A549 (cell line): ENCODE measurements at regions of chr17 and their contacts with region 1.

Region 1: DNA sequence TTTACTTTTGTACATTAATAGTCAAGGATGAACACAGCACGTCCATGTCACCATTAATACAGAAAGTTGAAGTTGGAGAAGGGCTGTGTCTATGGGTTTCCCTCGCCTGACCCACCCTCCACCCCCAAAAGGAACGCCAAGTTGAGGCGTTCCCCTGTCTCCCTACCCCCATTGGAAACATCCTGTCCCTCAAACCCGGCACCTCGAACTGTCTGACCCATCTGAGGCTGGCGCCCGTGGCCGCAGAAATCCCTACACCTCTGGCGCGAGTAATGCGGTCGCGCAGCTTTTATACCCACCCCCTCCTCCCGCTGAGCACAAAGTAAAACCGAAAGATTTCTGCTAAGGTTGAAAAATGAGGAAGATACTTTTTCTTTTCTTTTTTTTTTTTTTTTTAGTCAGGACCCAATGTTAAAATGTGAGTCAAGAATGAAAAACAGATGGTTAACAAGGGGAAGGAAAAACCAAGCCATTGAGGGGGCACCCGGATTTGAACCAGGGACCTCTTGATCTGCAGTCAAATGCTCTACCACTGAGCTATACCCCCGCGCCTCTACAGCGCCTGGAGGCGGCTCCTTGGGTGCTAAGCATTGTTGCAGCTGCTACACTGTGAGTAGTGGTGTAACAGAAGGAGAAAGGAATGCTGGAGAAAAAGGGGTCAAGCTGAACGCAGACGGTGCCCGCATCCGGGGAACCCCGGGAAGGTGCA is 887 bp upstream of the LASP1 start:
- DNase-seq: peak; percentile 92 to 93
- ATAC-seq: peak; percentile 25 to 65
- H3K4me3 ChIP-seq: peak overlapping the region; percentile 94
- H3K27ac ChIP-seq: peak overlapping the region; percentile 98
- H3K4me1 ChIP-seq: peaks cover 23% of the 10 kb centered on the region
- CTCF ChIP-seq: peak; percentile 51
- EP300 ChIP-seq: 0 out of 5 replicates have a peak, but pooled peaks of 1 of the 2 experiments have one; percentile 10
- POLR2A ChIP-seq: 0 out of 2 replicates have a peak, but pooled peaks have one; percentile 12
- RAD21 ChIP-seq: peak in 1 of 2 experiments; percentile 14; a peak in 1 of 5 replicates

Region 2: GRCh38 chr17:38853292-38854219 is 15.4 kb before region 1 on chr17 and contains the start of gene RPL23:
- CTCF ChIA-PET with region 1: interaction called, 7 read pairs
- POLR2A ChIA-PET with region 1: interaction called, 83 read pairs
- DNase-seq: peak; percentile 93 to 99
- ATAC-seq: peak; percentile 91 to 95
- H3K4me3 ChIP-seq: peak within 1 kb of the TSS; percentile 87
- H3K27ac ChIP-seq: peak within 1 kb of the TSS; percentile 85 to 93
- H3K4me1 ChIP-seq: peaks cover 24% of the 10 kb centered on the region
- CTCF ChIP-seq: no peak
- EP300 ChIP-seq: no peak
- POLR2A ChIP-seq: peak; percentile 97
- RAD21 ChIP-seq: peak in 1 of 2 experiments; percentile 10; a peak in 1 of 5 replicates
- polyA plus RNA-seq, gene RPL23: 2,297 and 2,715 TPM in 2 replicates

Region 3: DNA sequence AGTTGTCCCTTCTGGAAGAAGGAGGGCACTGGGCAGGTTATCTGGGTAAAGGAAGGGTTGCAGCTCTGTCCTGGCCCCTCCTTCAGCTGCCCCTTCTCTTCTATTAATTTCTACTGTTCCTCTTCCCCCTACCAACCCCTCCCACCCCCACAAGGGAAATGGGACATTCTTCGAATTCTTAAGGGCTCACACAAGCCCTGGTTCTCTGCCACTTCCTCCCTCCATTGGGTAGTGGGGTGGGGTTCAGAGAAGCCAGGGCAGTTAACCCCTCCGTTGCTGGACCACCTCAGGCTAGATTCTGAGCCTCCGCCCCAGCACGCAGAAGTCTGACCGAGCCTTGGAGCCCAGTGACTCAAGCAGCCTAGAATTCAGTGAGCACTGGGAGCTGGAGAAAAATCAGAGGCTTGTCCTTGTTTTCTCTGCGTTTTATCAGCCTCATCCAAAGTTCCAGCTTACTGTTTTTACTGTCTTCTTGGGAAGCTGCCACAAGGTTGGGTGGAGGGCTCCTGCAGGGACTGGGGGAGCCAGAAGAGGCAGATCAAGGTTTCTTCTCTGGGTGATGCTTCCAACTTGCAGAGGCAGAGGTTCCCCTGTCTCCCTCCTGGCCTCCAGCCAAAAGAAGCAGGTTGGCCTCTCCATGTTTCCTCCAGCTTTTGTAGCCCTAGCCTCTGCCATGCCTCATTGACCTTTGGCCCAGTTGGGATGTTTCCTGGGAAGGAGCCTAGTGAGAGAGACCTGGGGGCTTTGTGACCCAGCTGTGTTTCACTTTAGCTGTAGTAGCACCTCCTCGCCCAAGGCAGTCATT is 11.1 kb after region 1 on chr17:
- CTCF ChIA-PET with region 1: interaction called, 39 read pairs
- POLR2A ChIA-PET with region 1: interaction called, 33 read pairs
- DNase-seq: peak; percentile 87 to 95
- ATAC-seq: peak; percentile 64 to 78
- H3K4me3 ChIP-seq: peak overlapping the region; percentile 24
- H3K27ac ChIP-seq: peak overlapping the region; percentile 91 to 98
- H3K4me1 ChIP-seq: peaks cover 100% of the 10 kb centered on the region
- CTCF ChIP-seq: no peak
- EP300 ChIP-seq: peak in 1 of 2 experiments; percentile 66; a peak in 1 of 5 replicates
- POLR2A ChIP-seq: no peak
- RAD21 ChIP-seq: no peak; a peak in 1 of 5 replicates

Region 4: DNA sequence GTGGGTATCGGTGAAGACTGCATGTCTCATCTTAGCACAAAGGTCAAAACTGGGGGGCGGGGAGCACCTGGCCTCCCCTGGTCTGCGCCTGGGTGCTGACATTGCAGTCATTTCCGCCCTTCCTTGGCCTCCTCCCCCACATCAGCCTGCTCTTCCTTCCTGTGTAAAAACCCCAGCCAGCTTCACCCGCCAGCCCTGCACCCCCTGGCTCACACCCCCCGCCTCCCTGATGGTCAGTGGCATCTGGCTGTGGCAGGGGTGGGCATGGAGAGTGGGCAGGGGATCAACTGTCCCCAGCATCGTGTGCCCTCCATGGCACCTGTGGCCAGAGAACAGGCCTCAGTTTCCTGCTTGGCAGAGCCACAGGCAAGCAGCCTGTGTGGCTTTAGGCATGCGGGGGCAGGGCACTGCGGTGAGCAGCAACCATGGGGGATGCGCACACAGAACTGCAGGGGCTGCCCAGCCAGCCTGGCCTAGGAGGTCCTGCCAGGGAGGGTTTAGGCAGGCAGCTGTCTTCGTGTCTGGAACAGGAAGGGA is 29.9 kb after region 1 on chr17:
- CTCF ChIA-PET with region 1: interaction called, 19 read pairs
- POLR2A ChIA-PET with region 1: interaction called, 22 read pairs
- DNase-seq: no peak
- ATAC-seq: no peak
- H3K4me3 ChIP-seq: no peak overlapping the region
- H3K27ac ChIP-seq: peak overlapping the region in 1 of 2 experiments; percentile 85; a peak in 3 of 6 replicates
- H3K4me1 ChIP-seq: peaks cover 66% of the 10 kb centered on the region
- CTCF ChIP-seq: no peak
- EP300 ChIP-seq: no peak
- POLR2A ChIP-seq: no peak
- RAD21 ChIP-seq: no peak

Region 5: DNA sequence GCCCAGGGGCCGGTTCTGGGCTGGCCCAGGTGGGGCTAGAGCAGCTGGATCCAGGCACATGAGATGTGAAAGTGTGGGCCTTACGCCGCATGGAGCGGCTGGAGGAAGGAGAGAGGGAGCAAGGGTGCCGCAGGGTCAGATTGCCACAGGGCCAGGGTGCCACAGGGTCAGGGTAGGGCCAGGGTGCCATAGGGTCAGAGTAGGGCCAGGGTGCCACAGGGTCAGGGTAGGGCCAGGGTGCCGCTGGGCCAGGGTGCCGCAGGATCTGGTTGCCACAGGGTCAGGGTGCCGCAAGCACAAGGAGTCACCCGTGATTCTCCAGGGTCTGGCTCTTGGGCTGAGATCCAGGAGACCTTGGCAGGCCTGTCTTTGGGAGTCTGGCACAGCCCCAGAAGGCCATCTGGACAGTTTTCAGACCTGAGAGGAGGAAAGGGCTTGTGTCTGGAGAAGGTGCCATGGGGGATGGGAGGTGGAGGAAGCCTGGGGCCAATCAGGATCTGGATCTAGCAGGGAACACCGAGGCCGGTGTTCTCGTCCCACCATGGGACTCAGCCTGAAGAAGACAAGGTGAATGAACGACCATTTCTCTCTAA is 43.3 kb after region 1 on chr17:
- CTCF ChIA-PET with region 1: interaction called, 90 read pairs
- POLR2A ChIA-PET with region 1: no interaction called
- DNase-seq: no peak
- ATAC-seq: no peak
- H3K4me3 ChIP-seq: no peak overlapping the region
- H3K27ac ChIP-seq: peak overlapping the region in 1 of 2 experiments; percentile 39; a peak in 1 of 6 replicates
- H3K4me1 ChIP-seq: peaks cover 34% of the 10 kb centered on the region
- CTCF ChIP-seq: no peak
- EP300 ChIP-seq: no peak
- POLR2A ChIP-seq: no peak
- RAD21 ChIP-seq: no peak

Region 6: GRCh38 chr17:38922538-38923297 is 53.7 kb after region 1 on chr17:
- CTCF ChIA-PET with region 1: interaction called, 90 read pairs
- POLR2A ChIA-PET with region 1: interaction called, 3 read pairs
- DNase-seq: no peak
- ATAC-seq: peak; percentile 59 to 63
- H3K4me3 ChIP-seq: no peak overlapping the region
- H3K27ac ChIP-seq: peak overlapping the region in 1 of 2 experiments; percentile 45; a peak in 3 of 6 replicates
- H3K4me1 ChIP-seq: peaks cover 11% of the 10 kb centered on the region; the same call in 1 of the 3 replicates
- CTCF ChIP-seq: no peak
- EP300 ChIP-seq: no peak
- POLR2A ChIP-seq: no peak
- RAD21 ChIP-seq: no peak

Region 7: DNA sequence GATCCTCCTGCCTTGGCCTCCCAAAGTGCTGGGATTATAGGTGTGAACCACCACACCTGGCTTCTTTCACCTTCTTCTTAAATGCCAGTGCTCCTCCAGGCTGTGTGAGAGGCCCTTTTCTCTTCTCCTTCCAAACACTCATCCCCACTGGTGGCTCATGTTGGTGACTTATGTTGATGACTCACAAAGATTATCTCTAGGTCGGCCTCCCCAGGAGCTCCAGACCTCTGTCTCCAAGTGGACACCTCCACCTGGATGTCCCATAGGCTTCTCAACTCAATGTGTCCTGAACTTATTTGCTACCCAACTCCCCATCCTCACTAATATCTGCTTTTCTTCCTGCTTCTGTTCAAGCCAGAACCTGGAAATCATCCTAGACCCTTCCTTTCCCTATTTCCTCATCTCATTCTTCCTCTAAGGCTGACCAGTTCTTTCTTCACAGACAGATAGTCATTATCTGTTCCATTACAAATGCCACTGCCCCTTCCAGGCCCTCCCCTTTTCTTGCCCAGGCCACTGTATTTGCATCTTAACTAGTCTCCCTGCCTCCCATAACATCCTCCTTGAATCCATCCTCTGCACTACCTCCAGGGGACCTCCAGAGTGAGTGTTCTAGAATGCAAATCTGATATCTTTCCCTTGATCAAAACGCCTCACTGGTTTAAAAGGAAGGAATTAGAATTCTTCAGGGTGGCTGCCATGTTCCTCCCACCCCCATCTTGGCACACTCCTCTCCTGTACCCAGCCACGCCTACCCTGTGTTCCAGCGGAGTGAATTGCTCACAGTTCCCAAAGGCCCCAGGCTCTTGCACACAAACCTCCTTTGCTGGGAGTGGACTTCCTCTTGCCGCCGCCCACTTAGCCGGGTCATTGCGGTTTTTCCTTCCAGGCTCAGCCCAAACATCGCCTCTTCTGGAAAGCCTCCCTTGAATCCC is 133.0 kb after region 1 on chr17:
- CTCF ChIA-PET with region 1: no interaction called
- POLR2A ChIA-PET with region 1: no interaction called
- DNase-seq: peak in 1 of 2 experiments; percentile 33
- ATAC-seq: peak; percentile 45 to 63; a peak in 4 of 6 replicates
- H3K4me3 ChIP-seq: no peak overlapping the region
- H3K27ac ChIP-seq: no peak overlapping the region
- H3K4me1 ChIP-seq: no peaks in the 10 kb centered on the region
- CTCF ChIP-seq: no peak
- EP300 ChIP-seq: no peak
- POLR2A ChIP-seq: no peak
- RAD21 ChIP-seq: no peak

Region 8: GRCh38 chr17:39057701-39058206 is 188.8 kb after region 1 on chr17:
- CTCF ChIA-PET with region 1: no interaction called
- POLR2A ChIA-PET with region 1: interaction called, 10 read pairs
- DNase-seq: no peak
- ATAC-seq: no peak
- H3K4me3 ChIP-seq: no peak overlapping the region; the same call in 1 of the 3 replicates
- H3K27ac ChIP-seq: peak overlapping the region in 1 of 2 experiments; percentile 89; a peak in 3 of 6 replicates
- H3K4me1 ChIP-seq: no peaks in the 10 kb centered on the region
- CTCF ChIP-seq: no peak
- EP300 ChIP-seq: no peak
- POLR2A ChIP-seq: no peak
- RAD21 ChIP-seq: no peak